Caco-2 (cell line): ENCODE measurements at regions of chr1 and their contacts with region 1.

Region 1: DNA sequence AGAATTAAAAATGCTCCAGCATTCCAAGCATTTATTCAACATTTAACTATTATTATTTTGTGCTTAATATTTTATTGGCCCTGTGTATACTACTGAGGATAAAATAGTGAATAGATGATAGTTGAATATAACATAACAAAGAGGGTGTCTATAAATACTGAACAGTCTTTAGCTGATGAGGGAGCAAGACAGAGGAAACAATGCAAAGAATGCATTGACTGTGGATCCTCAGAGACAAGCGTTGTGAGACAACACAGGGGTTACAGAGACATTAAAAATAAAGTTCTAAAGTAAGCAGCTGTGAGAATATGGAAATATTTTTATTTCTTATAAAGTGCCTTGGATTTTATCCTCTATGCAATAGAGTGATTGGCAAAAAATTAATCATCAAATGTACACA is 1133.1 kb downstream of the PLA2G4A start:
- DNase-seq: no peak
- H3K4me3 ChIP-seq: no peak overlapping the region
- H3K4me3 Mint-ChIP-seq: no peak overlapping the region
- H3K27ac Mint-ChIP-seq: no peak overlapping the region
- H3K4me1 ChIP-seq: no peaks in the 10 kb centered on the region
- H3K4me1 Mint-ChIP-seq: no peaks in the 10 kb centered on the region
- H3K27me3 ChIP-seq: no peaks in the 10 kb centered on the region
- H3K27me3 Mint-ChIP-seq: no peaks in the 10 kb centered on the region
- CTCF ChIP-seq: no peak

Region 2: GRCh38 chr1:187977298-187977697 is 15.4 kb after region 1 on chr1:
- CTCF ChIA-PET with region 1: no interaction called
- POLR2A ChIA-PET with region 1: no interaction called
- intact Hi-C with region 1: loop called (anchors 1 kb)
- DNase-seq: no peak
- H3K4me3 ChIP-seq: no peak overlapping the region
- H3K4me3 Mint-ChIP-seq: no peak overlapping the region
- H3K27ac Mint-ChIP-seq: no peak overlapping the region
- H3K4me1 ChIP-seq: no peaks in the 10 kb centered on the region
- H3K4me1 Mint-ChIP-seq: no peaks in the 10 kb centered on the region
- H3K27me3 ChIP-seq: no peaks in the 10 kb centered on the region
- H3K27me3 Mint-ChIP-seq: peaks cover 2% of the 10 kb centered on the region
- CTCF ChIP-seq: no peak